H1 (cell line): ENCODE measurements at regions of chr12 and their contacts with region 1.

Region 1: GRCh38 chr12:39990122-39991101 is 115.5 kb downstream of the SLC2A13 start:
- DNase-seq: peak; percentile 10 to 59
- H3K4me3 ChIP-seq: no peak overlapping the region
- H3K27ac ChIP-seq: no peak overlapping the region
- H3K4me1 ChIP-seq: peaks cover 0 to 5% (median 2%) of the 10 kb centered on the region in 4 experiments; a peak in 2 of 7 replicates
- H3K27me3 ChIP-seq: peaks cover 0 to 1% (median 0%) of the 10 kb centered on the region in 4 experiments; a peak in 1 of 7 replicates
- CTCF ChIP-seq: peak; percentile 60 to 67 (median 64)
- EP300 ChIP-seq: no peak
- POLR2A ChIP-seq: no peak
- RAD21 ChIP-seq: peak; percentile 60 to 68

Region 2: DNA sequence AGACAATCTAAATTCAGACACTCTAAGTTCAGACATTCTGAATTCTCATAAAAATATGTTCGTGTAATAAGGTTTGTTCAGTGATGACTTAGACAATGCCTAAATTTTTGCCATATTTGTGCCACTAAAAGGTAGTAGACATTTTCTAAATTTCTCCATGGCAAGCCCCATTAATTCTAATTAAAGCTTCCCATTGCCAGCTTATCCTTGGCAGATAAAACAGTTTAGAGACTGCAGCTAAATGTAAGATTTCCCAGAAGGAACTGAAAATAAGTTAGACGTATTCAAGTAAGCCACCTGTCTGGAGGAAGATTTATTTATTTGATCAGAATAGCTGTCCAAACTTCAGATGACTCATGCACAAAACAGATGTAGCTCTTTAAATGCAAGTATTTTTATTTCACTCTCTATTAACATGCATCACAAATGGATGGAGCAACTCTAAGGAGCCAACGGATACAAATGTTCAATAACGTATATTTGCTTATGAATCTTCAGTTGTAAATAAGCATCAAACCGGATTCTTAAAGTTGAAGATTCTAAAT is 15.0 kb before region 1 on chr12:
- CTCF ChIA-PET with region 1: interaction called, 20 read pairs
- POLR2A ChIA-PET with region 1: no interaction called
- DNase-seq: no peak
- H3K4me3 ChIP-seq: no peak overlapping the region
- H3K27ac ChIP-seq: no peak overlapping the region
- H3K4me1 ChIP-seq: peaks cover 0 to 6% (median 4%) of the 10 kb centered on the region in 4 experiments; a peak in 3 of 7 replicates
- H3K27me3 ChIP-seq: no peaks in the 10 kb centered on the region
- CTCF ChIP-seq: no peak
- EP300 ChIP-seq: no peak
- POLR2A ChIP-seq: no peak
- RAD21 ChIP-seq: no peak

Region 3: GRCh38 chr12:40010899-40011774 is 20.7 kb after region 1 on chr12:
- CTCF ChIA-PET with region 1: interaction called, 10 read pairs
- POLR2A ChIA-PET with region 1: no interaction called
- DNase-seq: no peak
- H3K4me3 ChIP-seq: no peak overlapping the region
- H3K27ac ChIP-seq: no peak overlapping the region
- H3K4me1 ChIP-seq: peaks cover 0 to 9% (median 2%) of the 10 kb centered on the region in 4 experiments; a peak in 2 of 7 replicates
- H3K27me3 ChIP-seq: no peaks in the 10 kb centered on the region
- CTCF ChIP-seq: peak in 2 of 3 experiments; percentile 71 to 91; a peak in 3 of 4 replicates
- EP300 ChIP-seq: no peak
- POLR2A ChIP-seq: no peak
- RAD21 ChIP-seq: peak; percentile 65 to 79

Region 4: GRCh38 chr12:40045656-40046055 is 55.2 kb after region 1 on chr12:
- CTCF ChIA-PET with region 1: no interaction called
- POLR2A ChIA-PET with region 1: no interaction called
- DNase-seq: no peak
- H3K4me3 ChIP-seq: no peak overlapping the region
- H3K27ac ChIP-seq: no peak overlapping the region
- H3K4me1 ChIP-seq: no peaks in the 10 kb centered on the region
- H3K27me3 ChIP-seq: no peaks in the 10 kb centered on the region
- CTCF ChIP-seq: no peak
- EP300 ChIP-seq: no peak
- POLR2A ChIP-seq: no peak
- RAD21 ChIP-seq: no peak

Region 5: GRCh38 chr12:40063414-40063813 is 73.0 kb after region 1 on chr12:
- CTCF ChIA-PET with region 1: no interaction called
- POLR2A ChIA-PET with region 1: no interaction called
- DNase-seq: no peak
- H3K4me3 ChIP-seq: no peak overlapping the region
- H3K27ac ChIP-seq: no peak overlapping the region
- H3K4me1 ChIP-seq: peaks cover 0 to 3% (median 0%) of the 10 kb centered on the region in 4 experiments; a peak in 1 of 7 replicates
- H3K27me3 ChIP-seq: no peaks in the 10 kb centered on the region
- CTCF ChIP-seq: no peak
- EP300 ChIP-seq: no peak
- POLR2A ChIP-seq: no peak
- RAD21 ChIP-seq: no peak

Region 6: DNA sequence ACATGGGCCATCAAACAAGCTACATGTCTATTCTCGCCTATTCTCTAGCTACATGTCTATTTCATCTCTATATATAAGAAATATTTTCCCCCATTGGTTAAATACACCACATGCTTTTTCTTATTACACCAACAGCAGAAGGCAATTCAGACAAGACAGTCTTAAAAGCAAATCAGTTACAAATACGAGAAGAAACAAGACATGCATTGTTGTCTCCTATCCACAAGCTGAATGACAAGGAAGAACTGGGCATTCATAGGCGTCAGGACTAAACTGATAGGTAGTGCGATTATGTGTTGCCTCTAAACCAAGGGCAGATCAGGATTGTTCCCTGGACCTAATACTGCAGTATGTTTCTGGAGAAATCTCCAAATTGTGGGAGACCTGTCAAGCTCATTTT is 96.1 kb after region 1 on chr12:
- CTCF ChIA-PET with region 1: no interaction called
- POLR2A ChIA-PET with region 1: no interaction called
- DNase-seq: no peak
- H3K4me3 ChIP-seq: no peak overlapping the region
- H3K27ac ChIP-seq: no peak overlapping the region
- H3K4me1 ChIP-seq: no peaks in the 10 kb centered on the region
- H3K27me3 ChIP-seq: no peaks in the 10 kb centered on the region
- CTCF ChIP-seq: no peak
- EP300 ChIP-seq: no peak
- POLR2A ChIP-seq: no peak
- RAD21 ChIP-seq: no peak

Region 7: GRCh38 chr12:40107098-40107802 is 116.8 kb after region 1 on chr12:
- CTCF ChIA-PET with region 1: interaction called, 20 read pairs
- POLR2A ChIA-PET with region 1: no interaction called
- DNase-seq: peak; percentile 41 to 94
- H3K4me3 ChIP-seq: no peak overlapping the region
- H3K27ac ChIP-seq: no peak overlapping the region
- H3K4me1 ChIP-seq: peaks cover 2 to 12% (median 4%) of the 10 kb centered on the region in 4 experiments
- H3K27me3 ChIP-seq: peaks cover 0 to 7% (median 6%) of the 10 kb centered on the region in 4 experiments; a peak in 6 of 7 replicates
- CTCF ChIP-seq: peak; percentile 72 to 87 (median 82)
- EP300 ChIP-seq: no peak
- POLR2A ChIP-seq: no peak
- RAD21 ChIP-seq: peak; percentile 77 to 84

Region 8: DNA sequence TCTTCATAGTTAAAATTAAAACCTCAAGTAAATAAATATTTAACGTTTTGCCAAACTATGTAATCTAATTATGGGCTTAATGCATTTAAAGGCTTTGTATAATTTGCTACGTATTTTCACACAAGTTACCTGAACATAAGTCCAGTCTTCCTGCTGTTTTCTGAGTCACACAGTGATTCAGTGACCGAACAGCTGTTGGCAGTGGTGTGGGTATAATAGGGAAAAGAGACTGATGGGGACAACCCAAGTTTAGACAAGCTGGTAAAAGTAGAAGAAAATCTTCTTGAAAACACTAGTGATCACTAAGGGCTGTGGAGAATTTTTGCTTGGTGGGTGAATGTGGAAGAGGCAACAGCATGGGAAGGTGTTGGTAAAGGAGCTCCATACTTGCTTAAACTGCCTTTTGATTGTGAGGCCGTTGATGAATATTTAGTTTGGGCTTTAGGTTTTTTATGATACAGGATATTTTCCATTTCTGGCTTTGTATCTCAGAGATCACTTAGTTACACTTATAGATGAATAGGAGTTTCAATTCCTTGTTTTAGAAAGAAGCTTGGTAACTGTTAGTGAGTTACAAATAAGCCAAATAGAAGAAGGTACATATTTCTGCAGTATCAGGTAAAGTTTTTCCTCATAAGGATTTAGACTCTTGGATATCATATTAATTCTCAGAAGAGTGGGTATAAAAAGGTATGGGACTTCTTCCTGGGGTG is 258.3 kb after region 1 on chr12:
- CTCF ChIA-PET with region 1: no interaction called
- POLR2A ChIA-PET with region 1: no interaction called
- DNase-seq: no peak
- H3K4me3 ChIP-seq: no peak overlapping the region
- H3K27ac ChIP-seq: no peak overlapping the region
- H3K4me1 ChIP-seq: no peaks in the 10 kb centered on the region
- H3K27me3 ChIP-seq: no peaks in the 10 kb centered on the region
- CTCF ChIP-seq: no peak
- EP300 ChIP-seq: no peak
- POLR2A ChIP-seq: no peak
- RAD21 ChIP-seq: no peak